ENCODE measurements at regions of chr20 and their contacts with region 1.

Region 1: GRCh38 chr20:5100684-5101347 is 18.9 kb downstream of the PCNA start:
- DNase-seq: peak; percentile 79
- ATAC-seq: peak; percentile 86
- H3K4me3 ChIP-seq: no peak overlapping the region
- H3K4me3 Mint-ChIP-seq: no peak overlapping the region
- H3K27ac ChIP-seq: no peak overlapping the region
- H3K27ac Mint-ChIP-seq: peak overlapping the region; percentile 10
- H3K4me1 ChIP-seq: peaks cover 0 to 3% of the 10 kb centered on the region in 2 donors
- H3K4me1 Mint-ChIP-seq: peaks cover 3% of the 10 kb centered on the region
- H3K27me3 ChIP-seq: no peaks in the 10 kb centered on the region
- H3K27me3 Mint-ChIP-seq: no peaks in the 10 kb centered on the region
- CTCF ChIP-seq: peak; percentile 96

Region 2: GRCh38 chr20:4740774-4741431 is 359.9 kb before region 1 on chr20:
- CTCF ChIA-PET with region 1: interaction called, 13 read pairs
- POLR2A ChIA-PET with region 1: no interaction called
- intact Hi-C with region 1: no loop called
- DNase-seq: peak; percentile 76
- ATAC-seq: peak; percentile 56
- H3K4me3 ChIP-seq: no peak overlapping the region
- H3K4me3 Mint-ChIP-seq: no peak overlapping the region
- H3K27ac ChIP-seq: no peak overlapping the region
- H3K27ac Mint-ChIP-seq: no peak overlapping the region
- H3K4me1 ChIP-seq: peaks cover 0 to 3% of the 10 kb centered on the region in 2 donors
- H3K4me1 Mint-ChIP-seq: peaks cover 6% of the 10 kb centered on the region
- H3K27me3 ChIP-seq: peaks cover 0 to 3% (median 1%) of the 10 kb centered on the region in 4 experiments
- H3K27me3 Mint-ChIP-seq: peaks cover 14% of the 10 kb centered on the region
- CTCF ChIP-seq: peak; percentile 94

Region 3: GRCh38 chr20:4956200-4956810 is 144.5 kb before region 1 on chr20:
- CTCF ChIA-PET with region 1: interaction called, 47 read pairs
- POLR2A ChIA-PET with region 1: no interaction called
- intact Hi-C with region 1: loop called (anchors 1 kb)
- DNase-seq: peak; percentile 74
- ATAC-seq: peak; percentile 56
- H3K4me3 ChIP-seq: no peak overlapping the region
- H3K4me3 Mint-ChIP-seq: no peak overlapping the region
- H3K27ac ChIP-seq: no peak overlapping the region
- H3K27ac Mint-ChIP-seq: no peak overlapping the region
- H3K4me1 ChIP-seq: peaks cover 4 to 6% of the 10 kb centered on the region in 2 donors
- H3K4me1 Mint-ChIP-seq: peaks cover 22% of the 10 kb centered on the region
- H3K27me3 ChIP-seq: no peaks in the 10 kb centered on the region
- H3K27me3 Mint-ChIP-seq: no peaks in the 10 kb centered on the region
- CTCF ChIP-seq: peak; percentile 89

Region 4: DNA sequence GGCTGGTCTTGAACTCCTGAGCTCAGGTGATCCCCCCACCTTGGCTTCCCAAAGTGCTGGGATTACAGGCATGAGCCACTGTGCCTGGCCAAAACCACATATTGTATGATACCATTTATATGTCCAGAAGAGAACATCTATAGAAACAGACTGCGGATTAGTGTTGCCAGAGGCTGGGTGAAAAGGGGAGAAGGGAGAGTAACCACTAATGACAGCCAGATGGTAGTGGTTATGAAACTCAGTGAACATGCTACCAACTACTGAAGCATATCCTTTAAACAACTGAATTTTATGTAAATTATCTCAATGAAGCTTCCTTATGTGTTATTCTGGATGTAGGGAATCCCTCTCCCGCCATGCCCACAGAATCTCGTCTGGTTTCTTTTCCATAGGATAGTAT is 115.2 kb before region 1 on chr20:
- CTCF ChIA-PET with region 1: interaction called, 24 read pairs
- POLR2A ChIA-PET with region 1: no interaction called
- intact Hi-C with region 1: no loop called
- DNase-seq: peak; percentile 67
- ATAC-seq: peak; percentile 61
- H3K4me3 ChIP-seq: peak overlapping the region in 1 of 5 experiments; percentile 19
- H3K4me3 Mint-ChIP-seq: peak overlapping the region; percentile 82
- H3K27ac ChIP-seq: peak overlapping the region; percentile 73 to 75
- H3K27ac Mint-ChIP-seq: peak overlapping the region; percentile 91
- H3K4me1 ChIP-seq: peaks cover 60 to 69% of the 10 kb centered on the region in 2 donors
- H3K4me1 Mint-ChIP-seq: peaks cover 71% of the 10 kb centered on the region
- H3K27me3 ChIP-seq: no peaks in the 10 kb centered on the region
- H3K27me3 Mint-ChIP-seq: no peaks in the 10 kb centered on the region
- CTCF ChIP-seq: no peak

Region 5: GRCh38 chr20:5046656-5047339 is 54.0 kb before region 1 on chr20:
- CTCF ChIA-PET with region 1: interaction called, 21 read pairs
- POLR2A ChIA-PET with region 1: no interaction called
- intact Hi-C with region 1: no loop called
- DNase-seq: peak; percentile 60
- ATAC-seq: peak; percentile 95
- H3K4me3 ChIP-seq: no peak overlapping the region
- H3K4me3 Mint-ChIP-seq: peak overlapping the region; percentile 0
- H3K27ac ChIP-seq: no peak overlapping the region
- H3K27ac Mint-ChIP-seq: peak overlapping the region; percentile 78
- H3K4me1 ChIP-seq: peaks cover 7 to 9% of the 10 kb centered on the region in 2 donors
- H3K4me1 Mint-ChIP-seq: peaks cover 30% of the 10 kb centered on the region
- H3K27me3 ChIP-seq: no peaks in the 10 kb centered on the region
- H3K27me3 Mint-ChIP-seq: no peaks in the 10 kb centered on the region
- CTCF ChIP-seq: no peak

Region 6: DNA sequence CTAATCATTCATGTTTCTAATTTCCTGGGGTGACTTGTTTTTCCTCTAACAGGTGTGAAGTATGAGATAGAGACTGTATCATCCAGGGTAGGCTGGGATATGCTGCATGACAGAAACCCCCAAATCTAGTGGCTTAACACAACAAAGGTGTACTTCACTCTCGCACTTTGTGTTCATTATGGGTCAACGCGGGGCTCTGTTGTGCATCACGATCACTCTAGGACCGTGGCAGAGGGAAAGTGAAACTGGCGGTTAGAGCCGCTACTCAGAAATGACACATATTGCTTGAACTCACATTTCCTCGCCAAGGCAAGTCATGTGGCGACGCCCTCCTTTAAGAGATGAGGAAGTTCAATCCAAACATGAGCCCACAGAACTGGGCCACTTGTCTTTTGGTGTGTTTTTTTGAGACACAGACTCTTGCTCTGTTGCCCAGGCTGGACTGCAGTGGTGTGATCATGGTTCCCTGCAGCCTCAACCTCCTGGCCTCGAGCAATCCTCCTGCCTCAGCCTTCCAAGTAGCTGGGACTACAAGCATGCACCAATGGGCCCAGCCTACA is 22.3 kb before region 1 on chr20:
- CTCF ChIA-PET with region 1: interaction called, 47 read pairs
- POLR2A ChIA-PET with region 1: no interaction called
- intact Hi-C with region 1: loop called (anchors 2 kb)
- DNase-seq: peak; percentile 91
- ATAC-seq: peak; percentile 96
- H3K4me3 ChIP-seq: peak overlapping the region; percentile 23 to 68 (median 50)
- H3K4me3 Mint-ChIP-seq: peak overlapping the region; percentile 85
- H3K27ac ChIP-seq: peak overlapping the region; percentile 85 to 93
- H3K27ac Mint-ChIP-seq: peak overlapping the region; percentile 94
- H3K4me1 ChIP-seq: peaks cover 37 to 50% of the 10 kb centered on the region in 2 donors
- H3K4me1 Mint-ChIP-seq: peaks cover 51% of the 10 kb centered on the region
- H3K27me3 ChIP-seq: no peaks in the 10 kb centered on the region
- H3K27me3 Mint-ChIP-seq: no peaks in the 10 kb centered on the region
- CTCF ChIP-seq: no peak

Region 7: GRCh38 chr20:5168651-5169396 is 68.0 kb after region 1 on chr20:
- CTCF ChIA-PET with region 1: no interaction called
- POLR2A ChIA-PET with region 1: no interaction called
- intact Hi-C with region 1: no loop called
- DNase-seq: peak; percentile 49
- ATAC-seq: peak; percentile 62
- H3K4me3 ChIP-seq: peak overlapping the region in 1 of 5 experiments; percentile 17
- H3K4me3 Mint-ChIP-seq: peak overlapping the region; percentile 71
- H3K27ac ChIP-seq: peak overlapping the region in 1 of 2 donors; percentile 62
- H3K27ac Mint-ChIP-seq: peak overlapping the region; percentile 88
- H3K4me1 ChIP-seq: peaks cover 35 to 62% of the 10 kb centered on the region in 2 donors
- H3K4me1 Mint-ChIP-seq: peaks cover 78% of the 10 kb centered on the region
- H3K27me3 ChIP-seq: no peaks in the 10 kb centered on the region
- H3K27me3 Mint-ChIP-seq: no peaks in the 10 kb centered on the region
- CTCF ChIP-seq: no peak

Region 8: DNA sequence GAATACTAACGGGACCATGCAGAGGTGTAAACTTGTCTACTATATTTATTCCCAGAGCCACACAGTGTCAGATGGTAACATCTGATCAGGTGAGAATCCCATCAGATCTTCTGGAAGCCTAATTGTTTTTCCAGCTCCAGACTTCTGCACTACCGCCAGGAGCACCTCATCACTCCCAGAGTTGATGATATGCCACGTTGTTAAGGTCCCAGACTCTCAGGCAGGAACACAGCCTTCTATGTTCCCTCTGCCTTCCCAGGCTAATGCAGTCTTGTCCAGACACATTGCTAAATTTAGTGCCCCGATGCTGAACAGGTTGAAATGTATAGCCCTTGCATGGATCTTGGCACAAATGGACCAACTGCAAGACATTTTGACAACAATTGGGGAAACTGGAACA is 129.7 kb after region 1 on chr20:
- CTCF ChIA-PET with region 1: no interaction called
- POLR2A ChIA-PET with region 1: no interaction called
- intact Hi-C with region 1: no loop called
- DNase-seq: no peak
- ATAC-seq: no peak
- H3K4me3 ChIP-seq: no peak overlapping the region
- H3K4me3 Mint-ChIP-seq: no peak overlapping the region
- H3K27ac ChIP-seq: no peak overlapping the region
- H3K27ac Mint-ChIP-seq: no peak overlapping the region
- H3K4me1 ChIP-seq: no peaks in the 10 kb centered on the region
- H3K4me1 Mint-ChIP-seq: no peaks in the 10 kb centered on the region
- H3K27me3 ChIP-seq: no peaks in the 10 kb centered on the region
- H3K27me3 Mint-ChIP-seq: peaks cover 15% of the 10 kb centered on the region
- CTCF ChIP-seq: no peak

Region 9: DNA sequence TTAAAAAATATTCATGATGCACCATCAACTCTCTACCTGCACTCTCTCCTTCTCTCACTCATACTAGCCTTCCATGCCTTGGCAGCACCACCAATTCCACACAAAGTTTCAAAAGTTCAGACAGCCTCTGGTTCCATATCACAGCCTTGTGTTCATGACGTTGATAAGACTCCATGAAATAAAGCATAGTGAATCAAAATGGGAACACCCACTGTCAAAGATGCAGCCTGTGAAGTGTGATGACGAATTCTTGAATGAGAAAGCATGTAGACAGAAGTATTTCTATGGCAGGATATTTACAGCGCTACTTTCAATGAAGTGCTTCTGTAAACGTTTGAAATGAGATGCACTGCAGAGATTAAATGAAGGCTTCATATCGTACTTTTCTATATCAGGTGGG is 1099.3 kb after region 1 on chr20:
- CTCF ChIA-PET with region 1: no interaction called
- POLR2A ChIA-PET with region 1: no interaction called
- intact Hi-C with region 1: no loop called
- DNase-seq: no peak
- ATAC-seq: no peak
- H3K4me3 ChIP-seq: no peak overlapping the region
- H3K4me3 Mint-ChIP-seq: no peak overlapping the region
- H3K27ac ChIP-seq: no peak overlapping the region
- H3K27ac Mint-ChIP-seq: no peak overlapping the region
- H3K4me1 ChIP-seq: no peaks in the 10 kb centered on the region
- H3K4me1 Mint-ChIP-seq: no peaks in the 10 kb centered on the region
- H3K27me3 ChIP-seq: no peaks in the 10 kb centered on the region
- H3K27me3 Mint-ChIP-seq: no peaks in the 10 kb centered on the region
- CTCF ChIP-seq: no peak